ENCODE measurements at regions of chr7 and their contacts with region 1.

Region 1: DNA sequence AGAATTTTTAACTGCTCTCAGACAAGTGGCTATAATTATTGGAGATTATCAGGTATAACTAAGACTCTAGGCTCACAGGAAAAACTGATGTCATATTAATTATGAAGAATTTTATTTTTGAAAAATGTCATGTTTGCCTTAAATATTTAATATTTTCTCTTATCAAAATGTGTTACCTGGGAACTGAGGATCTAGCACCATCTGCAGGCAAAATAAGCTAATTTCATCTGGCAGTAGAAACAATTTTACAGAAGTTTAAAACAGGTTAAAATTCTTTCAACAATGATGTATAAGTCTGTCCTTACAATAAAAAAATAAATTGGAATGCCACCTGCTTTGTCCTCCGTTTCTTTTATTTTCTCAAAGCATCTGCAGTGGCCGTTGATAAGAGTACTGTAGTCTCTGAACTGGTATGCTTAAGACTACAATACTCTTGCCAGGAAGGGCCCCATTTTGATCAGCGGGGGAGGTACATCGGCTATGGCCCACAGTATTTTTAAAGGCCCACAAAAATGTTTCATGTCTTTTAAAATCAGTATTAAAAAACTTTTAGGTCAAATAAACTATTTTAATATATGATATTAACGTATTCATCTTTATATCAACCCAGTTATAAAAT is 81.3 kb downstream of the VWDE start:
- DNase-seq: no peak
- H3K4me3 ChIP-seq: no peak overlapping the region
- H3K27ac ChIP-seq: no peak overlapping the region
- H3K4me1 ChIP-seq: peaks cover 0 to 5% (median 0%) of the 10 kb centered on the region in 4 donors
- H3K27me3 ChIP-seq: no peaks in the 10 kb centered on the region
- CTCF ChIP-seq: peak; percentile 63 to 68 (median 67)
- EP300 ChIP-seq: no peak
- POLR2A ChIP-seq: no peak

Region 2: GRCh38 chr7:11416641-11417458 is 905.5 kb before region 1 on chr7:
- in situ Hi-C with region 1: loop called in 2 of 4 experiments (anchors 25 kb)
- intact Hi-C with region 1: loop called (anchors 10 kb)
- DNase-seq: no peak
- H3K4me3 ChIP-seq: no peak overlapping the region
- H3K27ac ChIP-seq: no peak overlapping the region
- H3K4me1 ChIP-seq: no peaks in the 10 kb centered on the region
- H3K27me3 ChIP-seq: no peaks in the 10 kb centered on the region
- CTCF ChIP-seq: no peak
- EP300 ChIP-seq: no peak
- POLR2A ChIP-seq: no peak

Region 3: DNA sequence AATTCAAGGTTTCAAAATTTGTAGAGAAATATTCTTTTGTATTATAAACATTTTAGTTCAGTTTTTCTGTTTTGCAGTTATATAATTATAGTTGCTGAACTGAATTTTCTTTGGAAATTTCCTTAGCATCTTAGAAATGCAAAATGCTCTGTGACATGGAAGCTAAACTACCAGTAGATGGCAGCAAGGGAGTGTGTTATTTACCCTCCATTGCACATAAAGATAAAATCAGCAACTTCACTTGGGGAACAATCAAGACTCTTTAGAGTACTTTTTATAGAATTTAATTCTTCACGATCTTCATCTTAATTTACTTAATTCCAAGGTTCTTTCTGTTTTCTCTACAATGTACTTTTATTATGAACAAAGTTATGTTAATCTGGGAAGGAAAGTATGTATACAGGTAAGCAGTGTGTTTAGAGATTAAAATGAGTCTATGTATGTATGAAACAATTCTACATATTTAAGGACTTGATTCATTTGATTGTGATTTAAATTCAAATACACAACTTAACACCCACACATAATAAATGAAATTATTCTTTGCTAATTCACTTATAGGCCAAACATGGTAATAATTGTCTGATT is 894.6 kb before region 1 on chr7:
- in situ Hi-C with region 1: loop called in 3 of 4 experiments (anchors 10 to 25 kb)
- intact Hi-C with region 1: loop called (anchors 10 kb)
- DNase-seq: no peak
- H3K4me3 ChIP-seq: no peak overlapping the region
- H3K27ac ChIP-seq: no peak overlapping the region
- H3K4me1 ChIP-seq: no peaks in the 10 kb centered on the region
- H3K27me3 ChIP-seq: no peaks in the 10 kb centered on the region
- CTCF ChIP-seq: peak; percentile 56 to 76 (median 65)
- EP300 ChIP-seq: no peak
- POLR2A ChIP-seq: no peak

Region 4: DNA sequence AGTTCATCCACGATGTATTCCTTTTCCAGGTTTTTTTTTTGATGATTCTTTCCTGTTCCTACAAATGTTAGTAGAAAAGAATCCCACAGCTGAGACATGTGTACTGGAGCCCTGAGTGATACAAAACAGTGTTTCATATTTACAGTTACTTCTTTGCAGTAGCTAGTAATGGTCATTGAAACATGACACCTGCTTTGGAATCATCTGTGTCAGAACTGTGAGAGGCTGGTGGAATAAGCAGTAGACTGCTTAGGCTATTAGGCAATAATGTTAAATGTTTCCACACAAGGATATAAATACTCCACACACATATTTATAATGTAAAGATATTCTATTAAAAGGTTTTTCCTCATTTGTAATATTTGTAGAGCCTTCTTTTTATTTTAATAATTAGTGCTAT is 884.4 kb before region 1 on chr7:
- in situ Hi-C with region 1: loop called in 1 of 4 experiments (anchors 10 kb)
- intact Hi-C with region 1: no loop called
- DNase-seq: no peak
- H3K4me3 ChIP-seq: no peak overlapping the region
- H3K27ac ChIP-seq: no peak overlapping the region
- H3K4me1 ChIP-seq: no peaks in the 10 kb centered on the region
- H3K27me3 ChIP-seq: no peaks in the 10 kb centered on the region
- CTCF ChIP-seq: no peak
- EP300 ChIP-seq: no peak
- POLR2A ChIP-seq: no peak

Region 5: DNA sequence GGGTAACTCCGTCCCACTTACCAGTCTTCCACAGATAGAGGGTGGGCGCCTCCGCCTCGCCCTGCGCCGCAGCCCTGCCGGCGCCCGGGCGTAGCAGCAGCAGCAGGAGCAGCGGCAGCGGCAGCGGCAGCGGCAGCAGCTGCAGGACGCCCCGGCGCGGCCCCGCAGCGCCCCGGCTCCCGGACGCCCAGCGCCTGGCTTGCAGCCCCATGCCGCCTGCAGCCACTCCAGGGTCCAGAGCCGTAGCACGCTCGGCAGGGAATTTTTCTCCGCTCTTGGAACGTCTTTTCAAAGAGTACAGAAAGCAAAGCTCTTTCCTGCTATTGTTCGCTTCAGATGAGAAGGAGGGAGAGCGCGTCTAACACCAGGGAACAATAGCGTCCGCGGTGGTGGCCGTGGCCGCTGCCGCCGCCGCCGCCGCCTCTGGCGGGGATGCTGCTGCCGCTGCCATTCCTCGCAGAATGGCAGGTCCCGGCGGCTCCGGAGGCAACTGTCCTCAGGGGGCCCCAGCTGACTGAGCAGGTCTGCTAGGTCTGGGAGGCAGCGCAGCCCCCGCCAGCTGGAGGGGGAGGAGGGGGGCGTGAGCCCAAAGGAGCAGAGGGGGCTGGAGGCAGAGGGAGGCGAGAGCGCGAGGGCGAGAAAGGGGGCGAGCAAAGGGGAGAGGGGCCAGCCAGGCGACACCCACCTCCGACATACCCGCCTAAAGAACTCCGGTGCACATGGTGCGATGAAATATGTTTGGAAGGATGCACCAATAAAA is 490.5 kb before region 1 on chr7 and contains the start of gene THSD7A:
- in situ Hi-C with region 1: loop called in 2 of 4 experiments (anchors 25 kb)
- intact Hi-C with region 1: no loop called
- DNase-seq: peak; percentile 20
- H3K4me3 ChIP-seq: peak within 1 kb of the TSS; percentile 48 to 75 (median 52)
- H3K27ac ChIP-seq: peak within 1 kb of the TSS; percentile 40 to 69 (median 65)
- H3K4me1 ChIP-seq: peaks cover 0 to 17% (median 7%) of the 10 kb centered on the region in 4 donors
- H3K27me3 ChIP-seq: peaks cover 17% of the 10 kb centered on the region
- CTCF ChIP-seq: peak in 2 of 5 experiments; percentile 10 to 17
- EP300 ChIP-seq: no peak
- POLR2A ChIP-seq: no peak
- total RNA-seq, gene THSD7A: 1.9 to 18.9 (median 2.0) TPM

Region 6: GRCh38 chr7:11896663-11897062 is 425.7 kb before region 1 on chr7:
- in situ Hi-C with region 1: no loop called
- intact Hi-C with region 1: no loop called
- DNase-seq: no peak
- H3K4me3 ChIP-seq: no peak overlapping the region
- H3K27ac ChIP-seq: no peak overlapping the region
- H3K4me1 ChIP-seq: no peaks in the 10 kb centered on the region
- H3K27me3 ChIP-seq: no peaks in the 10 kb centered on the region
- CTCF ChIP-seq: no peak
- EP300 ChIP-seq: no peak
- POLR2A ChIP-seq: no peak

Region 7: GRCh38 chr7:12067141-12067831 is 255.1 kb before region 1 on chr7:
- in situ Hi-C with region 1: loop called (anchors 5 to 25 kb)
- intact Hi-C with region 1: loop called (anchors 2 kb)
- DNase-seq: peak; percentile 67
- H3K4me3 ChIP-seq: no peak overlapping the region
- H3K27ac ChIP-seq: no peak overlapping the region
- H3K4me1 ChIP-seq: no peaks in the 10 kb centered on the region
- H3K27me3 ChIP-seq: no peaks in the 10 kb centered on the region
- CTCF ChIP-seq: peak; percentile 67 to 79 (median 73)
- EP300 ChIP-seq: no peak
- POLR2A ChIP-seq: no peak